ENCODE measurements at regions of chr3 and their contacts with region 1.

Region 1: GRCh38 chr3:43162230-43163084 is 56.6 kb upstream of the POMGNT2 start:
- DNase-seq: peak; percentile 26 to 84 (median 62)
- ATAC-seq: peak; percentile 94
- H3K4me3 ChIP-seq: peak overlapping the region; percentile 18 to 30
- H3K4me3 Mint-ChIP-seq: peak overlapping the region; percentile 82
- H3K27ac ChIP-seq: peak overlapping the region; percentile 64 to 79
- H3K27ac Mint-ChIP-seq: peak overlapping the region; percentile 100
- H3K4me1 ChIP-seq: peaks cover 26% of the 10 kb centered on the region
- H3K4me1 Mint-ChIP-seq: peaks cover 28% of the 10 kb centered on the region
- H3K27me3 ChIP-seq: no peaks in the 10 kb centered on the region
- H3K27me3 Mint-ChIP-seq: no peaks in the 10 kb centered on the region
- CTCF ChIP-seq: peak; percentile 67

Region 2: GRCh38 chr3:43185656-43186314 is 23.3 kb after region 1 on chr3:
- CTCF ChIA-PET with region 1: interaction called, 12 read pairs
- POLR2A ChIA-PET with region 1: interaction called, 3 read pairs
- intact Hi-C with region 1: loop called in 1 of 2 experiments (anchors 2 kb)
- DNase-seq: no peak
- ATAC-seq: no peak
- H3K4me3 ChIP-seq: no peak overlapping the region
- H3K4me3 Mint-ChIP-seq: no peak overlapping the region
- H3K27ac ChIP-seq: no peak overlapping the region
- H3K27ac Mint-ChIP-seq: no peak overlapping the region
- H3K4me1 ChIP-seq: peaks cover 16% of the 10 kb centered on the region
- H3K4me1 Mint-ChIP-seq: peaks cover 40% of the 10 kb centered on the region
- H3K27me3 ChIP-seq: no peaks in the 10 kb centered on the region
- H3K27me3 Mint-ChIP-seq: no peaks in the 10 kb centered on the region
- CTCF ChIP-seq: no peak

Region 3: GRCh38 chr3:43223670-43224364 is 61.4 kb after region 1 on chr3:
- CTCF ChIA-PET with region 1: interaction called, 51 read pairs
- POLR2A ChIA-PET with region 1: interaction called, 24 read pairs
- intact Hi-C with region 1: loop called (anchors 1 to 2 kb)
- DNase-seq: peak in 2 of 9 experiments; percentile 50 to 58
- ATAC-seq: peak; percentile 30
- H3K4me3 ChIP-seq: no peak overlapping the region
- H3K4me3 Mint-ChIP-seq: no peak overlapping the region
- H3K27ac ChIP-seq: no peak overlapping the region
- H3K27ac Mint-ChIP-seq: peak overlapping the region; percentile 81
- H3K4me1 ChIP-seq: peaks cover 58% of the 10 kb centered on the region
- H3K4me1 Mint-ChIP-seq: peaks cover 64% of the 10 kb centered on the region
- H3K27me3 ChIP-seq: no peaks in the 10 kb centered on the region
- H3K27me3 Mint-ChIP-seq: no peaks in the 10 kb centered on the region
- CTCF ChIP-seq: peak; percentile 78

Region 4: DNA sequence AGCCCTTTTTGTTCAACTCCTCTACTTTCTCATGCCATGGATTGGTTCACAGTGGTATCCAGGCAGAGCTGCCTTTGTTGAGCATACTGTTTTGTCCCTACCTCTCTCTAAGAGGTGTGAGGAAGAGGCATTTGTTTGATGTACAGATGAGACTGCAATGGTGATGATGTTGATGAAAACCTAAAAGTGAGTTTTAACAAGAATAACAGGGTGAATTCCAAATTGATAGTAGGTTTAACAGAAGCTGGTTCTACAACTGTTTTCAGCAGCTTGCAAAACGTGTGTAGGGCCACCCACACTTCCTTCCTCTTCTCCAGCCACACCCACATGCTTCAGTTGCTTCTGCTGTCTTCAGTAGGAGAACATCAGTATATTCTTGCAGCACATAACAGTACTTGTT is 134.1 kb after region 1 on chr3:
- CTCF ChIA-PET with region 1: interaction called, 16 read pairs
- POLR2A ChIA-PET with region 1: interaction called, 18 read pairs
- intact Hi-C with region 1: no loop called
- DNase-seq: peak; percentile 22 to 92 (median 68)
- ATAC-seq: peak; percentile 88
- H3K4me3 ChIP-seq: peak overlapping the region; percentile 30 to 45
- H3K4me3 Mint-ChIP-seq: peak overlapping the region; percentile 87
- H3K27ac ChIP-seq: peak overlapping the region; percentile 57 to 87
- H3K27ac Mint-ChIP-seq: peak overlapping the region; percentile 96
- H3K4me1 ChIP-seq: peaks cover 89% of the 10 kb centered on the region
- H3K4me1 Mint-ChIP-seq: peaks cover 85% of the 10 kb centered on the region
- H3K27me3 ChIP-seq: no peaks in the 10 kb centered on the region
- H3K27me3 Mint-ChIP-seq: no peaks in the 10 kb centered on the region
- CTCF ChIP-seq: no peak

Region 5: GRCh38 chr3:43372809-43373559 is 210.5 kb after region 1 on chr3:
- CTCF ChIA-PET with region 1: interaction called, 62 read pairs
- POLR2A ChIA-PET with region 1: interaction called, 3 read pairs
- intact Hi-C with region 1: loop called (anchors 1 kb)
- DNase-seq: no peak
- ATAC-seq: no peak
- H3K4me3 ChIP-seq: no peak overlapping the region
- H3K4me3 Mint-ChIP-seq: no peak overlapping the region
- H3K27ac ChIP-seq: no peak overlapping the region
- H3K27ac Mint-ChIP-seq: no peak overlapping the region
- H3K4me1 ChIP-seq: peaks cover 7% of the 10 kb centered on the region
- H3K4me1 Mint-ChIP-seq: peaks cover 54% of the 10 kb centered on the region
- H3K27me3 ChIP-seq: no peaks in the 10 kb centered on the region
- H3K27me3 Mint-ChIP-seq: no peaks in the 10 kb centered on the region
- CTCF ChIP-seq: no peak

Region 6: DNA sequence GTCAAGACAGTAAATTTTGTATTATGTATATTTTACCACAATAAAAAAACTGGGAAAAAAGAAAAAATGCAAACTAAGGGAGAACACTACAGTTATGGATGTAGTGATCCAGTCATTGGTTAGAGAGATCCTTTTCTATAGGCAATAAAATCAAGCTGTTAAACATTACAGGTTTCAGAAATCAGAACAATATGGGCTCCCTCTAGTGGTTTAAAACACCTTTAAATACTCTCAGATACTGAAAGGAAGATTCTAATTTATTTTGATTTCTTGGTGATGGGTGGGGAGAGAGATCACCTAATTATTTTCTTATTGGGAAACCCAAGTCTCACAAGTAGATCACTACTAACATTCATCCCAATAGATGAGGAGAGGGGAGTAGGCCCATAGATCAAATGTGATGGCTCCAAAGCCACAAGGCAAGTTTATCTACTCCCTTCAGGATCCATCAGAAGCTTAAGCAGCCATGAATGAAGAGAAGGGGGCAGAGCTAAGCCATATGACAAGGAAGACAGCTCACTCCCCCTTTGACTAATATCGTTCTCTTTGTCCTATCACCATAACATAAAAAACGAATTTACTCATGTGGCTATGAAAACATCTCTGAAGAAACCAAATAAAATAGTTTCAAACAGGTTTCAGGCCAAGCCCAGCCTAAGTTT is 340.7 kb after region 1 on chr3:
- CTCF ChIA-PET with region 1: interaction called, 59 read pairs
- POLR2A ChIA-PET with region 1: interaction called, 6 read pairs
- intact Hi-C with region 1: loop called (anchors 1 kb)
- DNase-seq: peak in 2 of 9 experiments; percentile 57 to 72
- ATAC-seq: peak; percentile 60
- H3K4me3 ChIP-seq: no peak overlapping the region
- H3K4me3 Mint-ChIP-seq: no peak overlapping the region
- H3K27ac ChIP-seq: no peak overlapping the region
- H3K27ac Mint-ChIP-seq: no peak overlapping the region
- H3K4me1 ChIP-seq: peaks cover 42% of the 10 kb centered on the region
- H3K4me1 Mint-ChIP-seq: peaks cover 54% of the 10 kb centered on the region
- H3K27me3 ChIP-seq: no peaks in the 10 kb centered on the region
- H3K27me3 Mint-ChIP-seq: no peaks in the 10 kb centered on the region
- CTCF ChIP-seq: peak; percentile 65

Region 7: DNA sequence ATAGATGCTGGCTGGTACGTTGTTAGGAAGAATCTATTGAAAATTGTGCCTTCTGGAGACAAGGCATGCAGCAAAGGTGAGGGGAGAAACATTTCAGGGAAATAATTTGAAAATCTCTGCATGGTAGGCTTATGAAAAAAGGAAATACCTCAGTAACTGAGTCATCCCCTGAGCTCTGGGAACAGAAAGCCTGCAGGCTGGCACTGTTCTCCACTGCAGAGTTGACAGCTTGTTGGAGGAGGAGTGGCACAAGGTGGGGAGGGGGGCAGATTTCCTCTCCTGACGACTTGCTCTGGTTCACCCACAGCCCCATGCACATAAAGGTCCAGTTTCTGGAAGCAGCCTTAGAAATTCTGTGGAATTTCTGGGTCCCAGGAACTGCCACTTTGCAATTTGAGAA is 707.7 kb after region 1 on chr3:
- CTCF ChIA-PET with region 1: no interaction called
- POLR2A ChIA-PET with region 1: no interaction called
- intact Hi-C with region 1: no loop called
- DNase-seq: no peak
- ATAC-seq: no peak
- H3K4me3 ChIP-seq: no peak overlapping the region
- H3K4me3 Mint-ChIP-seq: no peak overlapping the region
- H3K27ac ChIP-seq: no peak overlapping the region
- H3K27ac Mint-ChIP-seq: no peak overlapping the region
- H3K4me1 ChIP-seq: no peaks in the 10 kb centered on the region
- H3K4me1 Mint-ChIP-seq: no peaks in the 10 kb centered on the region
- H3K27me3 ChIP-seq: no peaks in the 10 kb centered on the region
- H3K27me3 Mint-ChIP-seq: peaks cover 25% of the 10 kb centered on the region
- CTCF ChIP-seq: no peak